ENCODE measurements at regions of chr4 and their contacts with region 1.

Region 1: GRCh38 chr4:22688236-22688635 is 4.5 kb upstream of the GBA3 start:
- DNase-seq: no peak
- ATAC-seq: no peak

Region 2: DNA sequence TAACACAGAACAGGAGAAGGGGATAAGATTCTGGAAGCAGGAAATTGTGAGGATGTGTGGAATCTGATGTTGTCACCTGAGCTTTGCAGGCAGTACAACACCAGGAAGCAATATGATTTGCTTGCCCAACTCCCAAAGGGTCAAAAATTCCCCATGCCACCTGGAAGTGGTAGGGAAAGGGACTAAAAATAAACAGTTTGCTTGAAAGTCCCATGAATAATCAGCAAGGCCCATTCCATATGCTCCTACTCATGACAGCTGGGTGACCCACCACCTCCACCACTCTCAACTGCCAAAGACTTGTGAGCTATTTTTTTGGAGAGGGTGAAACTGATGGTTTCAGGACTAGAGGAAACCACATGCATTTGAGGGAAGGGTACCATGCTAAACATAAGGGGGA is 908.1 kb before region 1 on chr4:
- intact Hi-C with region 1: loop called in 1 of 2 experiments (anchors 10 kb)
- DNase-seq: no peak
- ATAC-seq: no peak

Region 3: DNA sequence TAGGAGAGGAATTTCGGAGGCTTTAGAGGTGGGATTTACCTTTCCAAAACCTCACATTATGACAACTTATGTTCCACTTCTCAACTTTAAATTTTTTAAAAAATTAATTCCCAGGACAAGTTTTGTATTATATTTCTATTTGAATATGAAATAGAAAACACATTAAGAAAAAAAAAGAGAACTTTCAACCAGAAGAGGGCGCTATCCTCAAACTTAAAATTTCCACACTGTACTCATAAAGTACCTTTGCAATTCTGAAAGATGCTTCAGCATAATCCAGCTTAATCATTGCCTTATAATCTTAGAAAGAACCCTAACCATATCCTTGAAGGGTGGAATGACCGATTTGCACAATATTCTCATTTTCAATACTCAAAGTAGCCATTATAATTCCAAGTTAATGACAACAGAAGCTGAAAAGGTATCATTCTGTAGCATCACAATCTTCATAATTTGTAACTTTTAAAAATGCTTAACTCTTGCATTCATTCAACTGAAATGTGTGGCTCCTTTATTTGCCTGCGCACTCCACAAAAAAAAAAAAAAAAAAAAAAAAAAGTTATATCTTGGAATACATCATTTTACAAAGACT is 897.7 kb before region 1 on chr4:
- intact Hi-C with region 1: loop called (anchors 5 to 10 kb)
- DNase-seq: no peak
- ATAC-seq: no peak

Region 4: DNA sequence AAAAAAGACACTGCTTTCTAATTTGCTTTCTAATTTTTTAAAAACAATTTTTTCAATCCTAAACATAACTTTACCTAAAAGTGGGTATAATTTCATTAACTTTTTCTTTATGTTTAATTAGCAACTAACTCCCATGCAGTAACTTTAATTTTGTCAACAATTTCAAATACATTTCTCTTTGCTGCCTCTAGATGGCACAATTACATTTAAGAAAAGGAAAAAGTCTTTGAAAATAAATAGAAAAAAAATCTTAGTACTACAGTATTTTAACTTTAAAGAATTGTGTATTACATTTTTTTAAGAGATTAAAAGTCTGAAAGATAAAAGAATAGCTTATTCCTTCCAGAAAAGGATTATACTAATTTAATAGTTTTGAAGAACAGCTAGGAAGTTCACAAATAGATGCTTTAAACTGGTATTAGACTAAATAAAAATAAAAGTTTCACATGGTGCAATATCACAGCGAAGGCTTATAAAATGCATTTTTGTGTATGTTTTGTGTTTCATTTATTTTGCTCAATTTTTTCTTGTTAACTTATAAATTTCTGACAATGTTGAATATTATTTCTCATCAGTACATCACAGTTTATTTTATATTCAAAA is 277.5 kb before region 1 on chr4:
- intact Hi-C with region 1: loop called in 1 of 2 experiments (anchors 2 kb)
- DNase-seq: no peak
- ATAC-seq: no peak